ENCODE measurements at regions of chr3 and their contacts with region 1.

Region 1: GRCh38 chr3:130276203-130276803 is 69.2 kb upstream of the COL6A5 start:
- DNase-seq: peak; percentile 16
- H3K4me3 ChIP-seq: no peak overlapping the region
- CTCF ChIP-seq: peak; percentile 75

Region 2: DNA sequence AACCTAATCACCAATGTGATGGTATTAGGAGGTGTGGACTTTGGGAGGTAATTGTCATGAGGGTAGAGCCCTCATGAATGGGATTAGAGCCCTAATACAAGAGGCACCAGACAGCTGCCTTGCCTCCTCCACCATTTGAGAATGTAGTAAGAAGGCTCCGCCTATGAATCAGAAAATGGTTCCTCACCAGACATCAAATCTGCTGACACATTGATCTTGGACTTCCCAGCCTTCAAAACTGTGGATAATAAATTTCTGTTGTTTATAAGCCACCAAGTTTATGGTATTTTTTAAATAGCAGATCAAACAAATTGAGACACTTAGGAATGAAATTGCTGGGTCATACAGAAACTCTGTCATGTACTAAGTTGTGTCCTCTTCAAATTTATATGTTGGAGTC is 12.4 kb after region 1 on chr3:
- CTCF ChIA-PET with region 1: interaction called, 13 read pairs
- POLR2A ChIA-PET with region 1: no interaction called
- DNase-seq: no peak
- H3K4me3 ChIP-seq: no peak overlapping the region
- CTCF ChIP-seq: no peak

Region 3: DNA sequence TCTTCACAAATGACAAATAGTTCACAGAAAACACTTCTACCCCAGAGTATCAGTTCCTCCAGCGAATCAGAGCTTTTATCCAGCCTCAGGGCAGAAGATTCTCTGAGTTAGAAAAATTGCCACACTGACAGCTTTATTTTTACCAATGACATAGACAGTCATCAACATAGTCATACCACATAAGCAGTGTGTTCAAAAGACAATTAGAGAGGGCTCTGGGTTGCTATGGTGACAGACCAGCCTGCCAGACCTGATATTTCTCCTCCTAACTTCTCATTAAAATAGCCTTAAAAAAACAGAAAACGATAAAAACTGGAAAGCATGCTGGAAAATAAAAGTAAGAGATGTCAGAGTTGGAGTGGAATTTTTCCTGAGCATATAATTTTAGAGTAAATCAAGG is 23.2 kb after region 1 on chr3:
- CTCF ChIA-PET with region 1: no interaction called
- POLR2A ChIA-PET with region 1: no interaction called
- DNase-seq: no peak
- H3K4me3 ChIP-seq: no peak overlapping the region
- CTCF ChIP-seq: no peak

Region 4: GRCh38 chr3:130539005-130539404 is 262.7 kb after region 1 on chr3:
- CTCF ChIA-PET with region 1: interaction called, 17 read pairs
- POLR2A ChIA-PET with region 1: no interaction called
- DNase-seq: no peak
- H3K4me3 ChIP-seq: no peak overlapping the region
- CTCF ChIP-seq: peak; percentile 71

Region 5: GRCh38 chr3:130892759-130893375 is 616.6 kb after region 1 on chr3:
- CTCF ChIA-PET with region 1: interaction called, 25 read pairs
- POLR2A ChIA-PET with region 1: no interaction called
- DNase-seq: no peak
- H3K4me3 ChIP-seq: peak overlapping the region; percentile 72
- CTCF ChIP-seq: peak; percentile 65

Measured in AG04449 (cell line).